AG04450 (cell line): ENCODE measurements at regions of chr11 and their contacts with region 1.

Region 1: DNA sequence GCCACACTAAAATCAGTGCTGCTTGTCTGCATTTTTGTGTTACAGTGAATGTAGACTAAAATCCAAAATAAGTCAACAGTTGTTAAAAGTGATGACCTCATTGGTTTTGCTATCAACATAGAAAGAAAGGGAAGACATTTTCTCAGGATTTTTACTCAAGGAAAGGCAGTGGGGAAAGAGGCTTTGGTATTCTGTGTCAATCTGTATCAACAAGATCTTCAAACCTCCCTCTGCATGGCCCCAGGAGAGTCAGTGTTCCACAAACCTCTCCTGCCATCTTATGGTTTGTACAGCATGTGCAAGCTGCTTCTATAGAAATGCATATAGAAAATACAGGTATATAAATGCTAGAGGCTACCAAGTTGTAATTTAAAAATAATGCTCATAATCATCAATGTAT is 13.8 kb upstream of the OR51M1 start:
- DNase-seq: peak; percentile 75
- H3K4me3 ChIP-seq: no peak overlapping the region
- H3K27ac ChIP-seq: no peak overlapping the region
- H3K27me3 ChIP-seq: no peaks in the 10 kb centered on the region
- CTCF ChIP-seq: peak; percentile 84

Region 2: DNA sequence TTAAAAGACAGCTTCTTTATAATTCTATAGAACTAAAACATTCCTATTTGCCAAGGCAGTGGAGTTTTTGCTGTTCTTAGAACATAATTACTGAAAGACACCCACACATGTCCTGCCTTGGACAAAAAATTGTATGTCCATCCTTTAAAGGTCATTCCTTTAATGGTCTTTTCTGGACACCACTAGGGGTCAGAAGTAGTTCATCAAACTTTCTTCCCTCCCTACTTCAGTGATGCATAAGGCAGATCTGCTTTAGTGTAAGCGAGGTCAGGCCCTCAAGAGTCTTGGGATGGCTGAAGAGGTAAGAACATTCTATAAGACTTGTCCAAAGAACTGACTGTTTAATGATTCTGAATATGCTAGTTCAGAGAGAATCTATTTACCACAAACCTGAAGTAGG is 165.0 kb before region 1 on chr11:
- CTCF ChIA-PET with region 1: interaction called, 39 read pairs
- POLR2A ChIA-PET with region 1: no interaction called
- DNase-seq: peak; percentile 58
- H3K4me3 ChIP-seq: no peak overlapping the region
- H3K27ac ChIP-seq: no peak overlapping the region
- H3K27me3 ChIP-seq: no peaks in the 10 kb centered on the region
- CTCF ChIP-seq: peak; percentile 67

Region 3: DNA sequence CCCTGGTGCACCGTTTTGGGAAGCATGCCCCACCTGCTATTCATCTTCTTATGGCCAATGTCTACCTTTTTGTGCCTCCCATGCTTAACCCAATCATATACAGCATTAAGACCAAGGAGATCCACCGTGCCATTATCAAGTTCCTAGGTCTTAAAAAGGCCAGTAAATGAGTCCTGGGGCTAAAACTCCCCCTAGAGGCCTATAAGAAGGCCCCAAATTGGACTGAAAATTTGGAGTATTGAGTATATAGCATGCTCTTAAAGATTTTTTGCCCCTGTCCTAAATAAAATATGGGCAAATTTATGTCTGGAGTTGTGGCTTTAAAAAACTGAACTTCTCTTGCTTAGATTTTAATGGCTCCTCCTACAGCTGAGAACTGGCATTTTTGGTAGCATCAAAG is 20.4 kb after region 1 on chr11:
- CTCF ChIA-PET with region 1: no interaction called
- POLR2A ChIA-PET with region 1: no interaction called
- DNase-seq: no peak
- H3K4me3 ChIP-seq: no peak overlapping the region
- H3K27ac ChIP-seq: no peak overlapping the region
- H3K27me3 ChIP-seq: no peaks in the 10 kb centered on the region
- CTCF ChIP-seq: 0 out of 2 replicates have a peak, but pooled peaks have one; percentile 25